ENCODE measurements at regions of chr1 and their contacts with region 1.

Region 1: GRCh38 chr1:43238085-43238484 is 31.7 kb upstream of the TMEM125 start:
- DNase-seq: peak in 4 of 5 donors; percentile 66 to 79 (median 74)
- ATAC-seq: peak; percentile 68 to 89 (median 78)
- H3K4me3 ChIP-seq: no peak overlapping the region
- H3K27ac ChIP-seq: peak overlapping the region in 9 of 12 donors; percentile 8 to 64 (median 41)
- H3K4me1 ChIP-seq: peaks cover 5 to 54% (median 13%) of the 10 kb centered on the region in 12 donors
- H3K27me3 ChIP-seq: no peaks in the 10 kb centered on the region
- CTCF ChIP-seq: peak; percentile 53 to 86 (median 78)
- POLR2A ChIP-seq: no peak

Region 2: DNA sequence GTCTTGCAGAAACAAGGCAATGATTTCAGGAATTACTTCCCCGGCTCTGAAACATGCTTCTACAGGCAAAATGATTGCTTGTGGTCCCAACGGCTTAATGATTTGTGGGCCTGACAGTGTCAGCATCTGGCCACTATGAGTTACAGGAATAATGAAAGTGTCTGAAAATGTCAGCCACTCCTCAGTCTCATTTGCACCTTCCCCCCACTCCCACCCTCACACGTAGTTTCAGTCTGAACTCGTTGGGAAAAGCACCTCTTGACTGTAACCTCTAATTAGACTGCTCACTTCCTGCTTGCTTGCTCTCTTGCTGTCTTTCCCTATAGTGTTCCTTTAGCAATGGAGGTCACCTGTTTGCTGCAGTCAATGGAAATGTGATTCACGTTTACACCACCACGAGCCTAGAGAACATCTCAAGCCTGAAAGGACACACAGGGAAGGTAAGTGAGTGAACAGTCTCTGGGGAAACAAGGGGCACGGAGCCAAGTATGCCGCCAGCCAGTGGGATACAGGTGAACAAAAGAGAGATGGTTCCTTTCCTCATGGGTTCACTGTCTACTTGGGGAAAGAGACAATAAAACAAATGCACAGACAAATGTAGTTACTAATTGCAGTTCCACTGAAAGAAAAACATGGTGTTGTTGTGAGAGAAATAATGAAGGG is 38.9 kb before region 1 on chr1:
- intact Hi-C with region 1: no loop called
- DNase-seq: no peak
- ATAC-seq: no peak
- H3K4me3 ChIP-seq: no peak overlapping the region
- H3K27ac ChIP-seq: no peak overlapping the region
- H3K4me1 ChIP-seq: no peaks in the 10 kb centered on the region
- H3K27me3 ChIP-seq: no peaks in the 10 kb centered on the region
- CTCF ChIP-seq: no peak
- POLR2A ChIP-seq: no peak

Region 3: GRCh38 chr1:43300378-43301094 is 62.5 kb after region 1 on chr1 and contains the start of gene TIE1:
- intact Hi-C with region 1: loop called in 5 of 10 experiments (anchors 2 to 5 kb)
- DNase-seq: peak in 4 of 5 donors; percentile 46 to 76 (median 72)
- ATAC-seq: peak; percentile 60 to 89 (median 68)
- H3K4me3 ChIP-seq: peak within 1 kb of the TSS; percentile 27 to 66 (median 52)
- H3K27ac ChIP-seq: peak within 1 kb of the TSS; percentile 66 to 93 (median 80)
- H3K4me1 ChIP-seq: peaks cover 0 to 54% (median 37%) of the 10 kb centered on the region in 12 donors
- H3K27me3 ChIP-seq: no peaks in the 10 kb centered on the region
- CTCF ChIP-seq: no peak
- POLR2A ChIP-seq: peak in 1 of 2 donors; percentile 57
- total RNA-seq, gene TIE1: 19.2 to 65.1 (median 28.4) TPM

Region 4: GRCh38 chr1:43358746-43359693 is 120.9 kb after region 1 on chr1 and contains the start of gene CDC20:
- intact Hi-C with region 1: loop called in 4 of 10 experiments (anchors 2 to 5 kb)
- DNase-seq: peak; percentile 98 to 99 (median 99)
- ATAC-seq: peak; percentile 98 to 100 (median 99)
- H3K4me3 ChIP-seq: peak within 1 kb of the TSS; percentile 38 to 92 (median 70)
- H3K27ac ChIP-seq: peak within 1 kb of the TSS; percentile 85 to 98 (median 94)
- H3K4me1 ChIP-seq: peaks cover 0 to 21% (median 11%) of the 10 kb centered on the region in 12 donors
- H3K27me3 ChIP-seq: no peaks in the 10 kb centered on the region
- CTCF ChIP-seq: no peak
- POLR2A ChIP-seq: no peak
- total RNA-seq, gene CDC20: 0.45 to 16.9 (median 1.5) TPM

Region 5: GRCh38 chr1:43383449-43383848 is 145.4 kb after region 1 on chr1:
- intact Hi-C with region 1: loop called in 6 of 10 experiments (anchors 2 to 10 kb)
- DNase-seq: no peak
- ATAC-seq: peak in 3 of 4 donors; percentile 30 to 70 (median 53)
- H3K4me3 ChIP-seq: no peak overlapping the region
- H3K27ac ChIP-seq: peak overlapping the region in 2 of 12 donors; percentile 18 to 44
- H3K4me1 ChIP-seq: peaks cover 2 to 36% (median 25%) of the 10 kb centered on the region in 12 donors
- H3K27me3 ChIP-seq: no peaks in the 10 kb centered on the region
- CTCF ChIP-seq: peak in 8 of 12 donors; percentile 24 to 50 (median 38)
- POLR2A ChIP-seq: no peak

Region 6: GRCh38 chr1:43414634-43415223 is 176.6 kb after region 1 on chr1:
- intact Hi-C with region 1: loop called in 3 of 10 experiments (anchors 1 to 5 kb)
- DNase-seq: peak in 2 of 5 donors; percentile 36 to 44
- ATAC-seq: peak; percentile 77 to 86 (median 78)
- H3K4me3 ChIP-seq: no peak overlapping the region
- H3K27ac ChIP-seq: no peak overlapping the region
- H3K4me1 ChIP-seq: peaks cover 0 to 7% (median 0%) of the 10 kb centered on the region in 12 donors
- H3K27me3 ChIP-seq: no peaks in the 10 kb centered on the region
- CTCF ChIP-seq: peak; percentile 52 to 74 (median 64)
- POLR2A ChIP-seq: no peak

Region 7: DNA sequence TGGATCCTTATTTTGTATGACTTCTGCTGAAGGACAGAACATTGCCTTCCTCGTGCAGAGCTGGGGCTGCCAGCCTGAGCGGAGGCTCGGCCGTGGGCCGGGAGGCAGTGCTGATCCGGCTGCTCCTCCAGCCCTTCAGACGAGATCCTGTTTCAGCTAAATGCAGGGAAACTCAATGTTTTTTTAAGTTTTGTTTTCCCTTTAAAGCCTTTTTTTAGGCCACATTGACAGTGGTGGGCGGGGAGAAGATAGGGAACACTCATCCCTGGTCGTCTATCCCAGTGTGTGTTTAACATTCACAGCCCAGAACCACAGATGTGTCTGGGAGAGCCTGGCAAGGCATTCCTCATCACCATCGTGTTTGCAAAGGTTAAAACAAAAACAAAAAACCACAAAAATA is 384.4 kb after region 1 on chr1:
- intact Hi-C with region 1: no loop called
- DNase-seq: no peak
- ATAC-seq: no peak
- H3K4me3 ChIP-seq: no peak overlapping the region
- H3K27ac ChIP-seq: no peak overlapping the region
- H3K4me1 ChIP-seq: no peaks in the 10 kb centered on the region
- H3K27me3 ChIP-seq: no peaks in the 10 kb centered on the region
- CTCF ChIP-seq: no peak
- POLR2A ChIP-seq: no peak

Measured in heart left ventricle (tissue), 16 donors.